Gastrocnemius medialis (tissue), 4 donors: ENCODE measurements at regions of chrX and their contacts with region 1.

Region 1: GRCh38 chrX:149962859-149963757 is 24.8 kb upstream of the EOLA2 start:
- DNase-seq: peak; percentile 2 to 37
- ATAC-seq: peak; percentile 63 to 97
- H3K4me3 ChIP-seq: no peak overlapping the region
- H3K27ac ChIP-seq: no peak overlapping the region
- H3K4me1 ChIP-seq: peaks cover 0 to 5% of the 10 kb centered on the region in 2 donors
- H3K27me3 ChIP-seq: no peaks in the 10 kb centered on the region
- CTCF ChIP-seq: peak in 4 of 5 experiments; percentile 35 to 58 (median 54)
- POLR2A ChIP-seq: no peak

Region 2: GRCh38 chrX:150094996-150095395 is 131.9 kb after region 1 on chrX:
- in situ Hi-C with region 1: no loop called
- intact Hi-C with region 1: no loop called
- DNase-seq: no peak
- ATAC-seq: no peak
- H3K4me3 ChIP-seq: no peak overlapping the region
- H3K27ac ChIP-seq: no peak overlapping the region
- H3K4me1 ChIP-seq: no peaks in the 10 kb centered on the region
- H3K27me3 ChIP-seq: no peaks in the 10 kb centered on the region
- CTCF ChIP-seq: no peak
- POLR2A ChIP-seq: no peak

Region 3: GRCh38 chrX:150200820-150201287 is 237.7 kb after region 1 on chrX:
- in situ Hi-C with region 1: loop called in 1 of 4 experiments (anchors 25 kb)
- intact Hi-C with region 1: no loop called
- DNase-seq: peak; percentile 64 to 82
- ATAC-seq: peak; percentile 91 to 93
- H3K4me3 ChIP-seq: no peak overlapping the region
- H3K27ac ChIP-seq: peak overlapping the region in 3 of 4 donors; percentile 33 to 59 (median 47)
- H3K4me1 ChIP-seq: no peaks in the 10 kb centered on the region
- H3K27me3 ChIP-seq: no peaks in the 10 kb centered on the region
- CTCF ChIP-seq: no peak
- POLR2A ChIP-seq: no peak

Region 4: GRCh38 chrX:150365051-150365989 is 402.2 kb after region 1 on chrX:
- in situ Hi-C with region 1: loop called in 2 of 4 experiments (anchors 25 kb)
- intact Hi-C with region 1: loop called (anchors 10 kb)
- DNase-seq: peak; percentile 29 to 65
- ATAC-seq: peak; percentile 38 to 51
- H3K4me3 ChIP-seq: peak overlapping the region; percentile 67 to 93 (median 71)
- H3K27ac ChIP-seq: peak overlapping the region; percentile 79 to 89 (median 85)
- H3K4me1 ChIP-seq: peaks cover 0 to 9% of the 10 kb centered on the region in 2 donors
- H3K27me3 ChIP-seq: no peaks in the 10 kb centered on the region
- CTCF ChIP-seq: peak; percentile 55 to 78 (median 66)
- POLR2A ChIP-seq: peak; percentile 46 to 56

Region 5: DNA sequence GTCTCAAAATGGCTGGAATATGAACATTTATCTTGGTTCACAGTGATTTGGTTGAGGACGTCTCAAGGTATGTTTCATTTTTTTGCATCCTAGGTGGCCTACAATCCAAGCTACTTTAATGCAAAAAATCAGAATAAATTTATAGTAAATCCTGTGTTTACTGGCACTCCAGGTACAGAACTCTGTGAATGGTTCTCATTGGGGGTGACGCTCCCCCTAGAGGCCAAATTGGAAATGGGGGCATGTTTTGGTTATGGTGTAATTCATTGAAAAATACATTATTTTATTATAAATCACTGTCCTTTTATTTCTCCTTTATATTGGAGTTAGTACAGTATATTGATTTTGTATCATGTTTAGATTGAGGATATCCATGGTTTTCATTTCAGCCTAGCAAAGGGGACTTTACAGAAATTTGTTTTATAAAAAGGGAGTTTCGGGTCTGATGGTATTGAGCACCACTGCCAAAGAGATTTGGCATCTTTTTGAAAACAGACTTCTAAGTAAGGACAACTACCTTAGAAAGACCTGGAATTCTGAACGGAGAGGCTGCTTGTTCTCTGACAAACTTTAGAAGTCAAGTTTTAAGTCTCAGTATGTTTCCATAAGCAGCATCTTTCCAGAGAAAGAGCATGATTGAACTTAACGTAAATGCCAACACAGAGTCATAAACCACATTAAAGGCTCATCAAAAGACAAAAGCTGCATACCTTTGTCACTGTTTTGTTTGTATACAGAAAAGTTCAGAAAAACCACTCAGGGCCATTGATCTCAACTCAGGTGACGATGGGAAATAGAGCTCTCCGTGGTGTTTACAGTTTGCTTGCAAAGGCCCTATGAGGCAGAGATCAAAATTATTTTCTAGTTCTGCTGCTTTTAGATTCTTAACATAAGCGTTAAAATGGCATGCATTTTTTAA is 624.7 kb after region 1 on chrX:
- in situ Hi-C with region 1: loop called in 1 of 4 experiments (anchors 25 kb)
- intact Hi-C with region 1: no loop called
- DNase-seq: no peak
- ATAC-seq: no peak
- H3K4me3 ChIP-seq: no peak overlapping the region
- H3K27ac ChIP-seq: no peak overlapping the region
- H3K4me1 ChIP-seq: peaks cover 4 to 6% of the 10 kb centered on the region in 2 donors
- H3K27me3 ChIP-seq: no peaks in the 10 kb centered on the region
- CTCF ChIP-seq: peak; percentile 11 to 63 (median 29)
- POLR2A ChIP-seq: no peak